IMR-90 (cell line): ENCODE measurements at regions of chr15 and their contacts with region 1.

Region 1: DNA sequence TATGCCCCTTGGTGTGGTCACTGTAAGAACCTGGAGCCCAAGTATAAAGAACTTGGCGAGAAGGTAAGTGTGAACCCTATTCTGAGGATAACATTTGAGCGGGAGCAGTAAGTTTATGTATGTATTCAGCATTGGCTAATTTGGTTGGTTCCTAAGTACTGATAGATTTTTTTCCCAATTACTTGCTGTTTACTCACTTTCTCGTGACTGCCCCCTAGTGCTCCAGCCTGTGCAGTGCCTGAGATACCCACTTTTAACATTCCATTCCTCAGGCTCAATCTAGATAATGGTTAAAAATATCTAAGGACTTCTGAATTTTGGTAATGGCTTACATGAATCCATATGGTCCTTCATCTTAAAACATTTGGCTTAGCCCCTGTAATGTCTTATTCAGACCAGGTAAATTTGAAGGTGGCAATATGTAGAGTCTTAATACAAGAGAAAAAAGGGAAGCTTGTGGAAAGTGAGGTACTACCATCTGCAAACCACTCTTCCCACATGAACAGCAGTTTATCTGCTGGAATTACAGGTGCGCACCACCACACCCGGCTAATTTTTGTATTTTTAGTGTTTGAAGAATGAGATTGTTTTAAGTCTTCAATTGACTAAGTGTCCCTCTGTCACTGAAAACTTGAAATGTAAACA is 7.1 kb downstream of the ELL3 start:
- DNase-seq: peak; percentile 64
- ATAC-seq: peak; percentile 94
- H3K4me3 ChIP-seq: no peak overlapping the region
- H3K27ac ChIP-seq: no peak overlapping the region
- H3K4me1 ChIP-seq: no peaks in the 10 kb centered on the region
- H3K27me3 ChIP-seq: no peaks in the 10 kb centered on the region
- CTCF ChIP-seq: peak; percentile 81
- POLR2A ChIP-seq: no peak
- RAD21 ChIP-seq: peak; percentile 52

Region 2: GRCh38 chr15:43484455-43484854 is 285.3 kb before region 1 on chr15:
- CTCF ChIA-PET with region 1: no interaction called
- POLR2A ChIA-PET with region 1: interaction called, 15 read pairs
- dilution Hi-C with region 1: no loop called
- in situ Hi-C with region 1: no loop called
- intact Hi-C with region 1: no loop called
- DNase-seq: no peak
- ATAC-seq: no peak; the same call in 1 of the 2 replicates
- H3K4me3 ChIP-seq: no peak overlapping the region
- H3K27ac ChIP-seq: no peak overlapping the region
- H3K4me1 ChIP-seq: no peaks in the 10 kb centered on the region
- H3K27me3 ChIP-seq: no peaks in the 10 kb centered on the region
- CTCF ChIP-seq: no peak
- POLR2A ChIP-seq: no peak
- RAD21 ChIP-seq: no peak